ENCODE measurements at regions of chr1 and their contacts with region 1.

Region 1: DNA sequence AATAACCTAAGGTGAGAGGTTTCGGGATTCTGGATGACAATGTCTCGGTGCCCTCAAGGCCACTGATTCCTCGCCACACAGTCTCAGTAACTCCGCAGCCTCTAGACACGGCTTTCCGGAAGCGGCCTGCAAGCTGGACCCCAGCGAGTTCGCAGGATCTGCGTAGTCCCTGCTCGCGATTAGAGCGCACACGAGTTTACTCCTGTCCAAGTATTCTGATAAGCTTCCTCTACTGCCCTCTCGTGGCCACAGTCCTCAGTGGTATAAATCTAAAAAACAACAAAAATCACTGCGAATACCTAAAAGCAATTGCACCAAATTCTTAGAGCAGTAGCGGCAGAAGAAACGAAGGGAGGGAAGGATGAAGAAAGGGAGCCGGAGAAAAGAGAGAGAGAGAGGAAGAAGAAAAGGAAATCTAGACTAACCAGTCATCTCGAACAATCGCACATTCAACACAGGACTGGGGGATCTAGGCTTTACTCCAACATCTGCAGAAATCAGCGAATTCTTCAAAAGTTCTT is 1.1 kb upstream of the PLXNA2 start:
- ATAC-seq: peak; percentile 34 to 68 (median 58)
- H3K4me3 ChIP-seq: peak overlapping the region; percentile 52 to 92 (median 87)
- H3K27ac ChIP-seq: no peak overlapping the region
- H3K4me1 ChIP-seq: peaks cover 33 to 41% of the 10 kb centered on the region in 2 donors

Region 2: GRCh38 chr1:208029381-208030287 is 215.6 kb before region 1 on chr1:
- in situ Hi-C with region 1: loop called in 5 of 9 experiments (anchors 10 to 25 kb)
- ATAC-seq: peak in 3 of 8 experiments; percentile 28 to 65 (median 57)
- H3K4me3 ChIP-seq: no peak overlapping the region
- H3K27ac ChIP-seq: no peak overlapping the region
- H3K4me1 ChIP-seq: peaks cover 0 to 4% of the 10 kb centered on the region in 2 donors

Region 3: GRCh38 chr1:208065862-208066261 is 179.4 kb before region 1 on chr1:
- in situ Hi-C with region 1: loop called in 1 of 9 experiments (anchors 25 kb)
- ATAC-seq: no peak
- H3K4me3 ChIP-seq: no peak overlapping the region
- H3K27ac ChIP-seq: no peak overlapping the region
- H3K4me1 ChIP-seq: peaks cover 25% of the 10 kb centered on the region in 2 donors

Region 4: GRCh38 chr1:208101661-208102431 is 143.4 kb before region 1 on chr1:
- in situ Hi-C with region 1: loop called in 2 of 9 experiments (anchors 25 kb)
- ATAC-seq: peak in 6 of 8 experiments; percentile 8 to 81 (median 17)
- H3K4me3 ChIP-seq: no peak overlapping the region
- H3K27ac ChIP-seq: peak overlapping the region; percentile 52 to 68
- H3K4me1 ChIP-seq: peaks cover 72 to 73% of the 10 kb centered on the region in 2 donors

Region 5: DNA sequence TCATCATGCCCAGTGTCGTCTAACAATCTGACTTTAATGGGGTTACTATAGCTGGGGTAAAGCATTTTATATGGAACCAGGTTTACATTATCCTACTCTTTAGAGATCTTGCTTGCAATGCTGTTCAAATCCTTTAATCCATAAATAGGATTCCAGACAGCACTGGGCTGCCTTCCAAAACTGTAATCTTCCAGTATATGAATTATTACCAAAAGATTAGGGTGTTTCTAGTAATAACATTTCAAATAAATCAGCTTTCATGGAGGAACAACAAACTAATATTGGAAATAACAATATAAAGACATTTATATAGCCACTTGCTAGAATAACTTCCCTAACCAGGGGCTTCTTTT is 87.5 kb after region 1 on chr1:
- in situ Hi-C with region 1: no loop called
- ATAC-seq: peak in 1 of 8 experiments; percentile 12
- H3K4me3 ChIP-seq: no peak overlapping the region
- H3K27ac ChIP-seq: no peak overlapping the region
- H3K4me1 ChIP-seq: peaks cover 22 to 34% of the 10 kb centered on the region in 2 donors

Region 6: DNA sequence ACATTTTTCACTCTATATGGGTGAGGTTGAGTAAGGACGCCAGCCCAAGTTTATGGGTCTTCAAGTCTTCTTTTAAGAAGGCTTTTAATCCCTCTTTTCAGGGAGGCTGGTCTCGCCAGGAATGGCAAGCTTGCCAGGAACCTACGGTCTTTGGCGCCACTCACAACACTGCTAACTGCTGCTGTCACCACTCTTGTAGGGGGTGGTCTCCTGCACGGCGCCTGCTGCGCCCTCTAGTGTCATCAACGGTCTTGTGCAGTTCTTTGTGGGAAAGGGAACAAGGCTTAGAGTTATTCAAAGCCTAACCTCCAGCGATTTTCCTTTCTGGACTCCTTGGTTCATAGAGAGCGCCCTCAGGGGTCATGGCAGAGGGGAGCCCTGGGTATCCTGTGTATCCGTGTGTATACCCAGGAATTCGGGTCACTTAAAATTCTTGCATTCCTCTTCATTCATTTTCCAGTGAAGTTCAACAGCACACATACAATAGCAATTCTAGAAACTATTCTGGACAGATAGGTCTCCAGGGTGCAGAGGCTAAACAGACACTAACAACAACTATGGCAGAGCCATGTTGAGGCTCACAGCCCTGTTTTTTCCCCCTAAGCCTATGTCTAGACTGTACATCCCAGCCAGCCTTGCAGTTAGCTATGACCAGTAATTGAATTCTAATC is 945.5 kb after region 1 on chr1:
- in situ Hi-C with region 1: loop called in 1 of 9 experiments (anchors 25 kb)
- ATAC-seq: peak; percentile 79 to 100 (median 99)
- H3K4me3 ChIP-seq: no peak overlapping the region
- H3K27ac ChIP-seq: no peak overlapping the region
- H3K4me1 ChIP-seq: peaks cover 0 to 5% of the 10 kb centered on the region in 2 donors